MCF 10A (cell line): ENCODE measurements at regions of chr20 and their contacts with region 1.

Region 1: DNA sequence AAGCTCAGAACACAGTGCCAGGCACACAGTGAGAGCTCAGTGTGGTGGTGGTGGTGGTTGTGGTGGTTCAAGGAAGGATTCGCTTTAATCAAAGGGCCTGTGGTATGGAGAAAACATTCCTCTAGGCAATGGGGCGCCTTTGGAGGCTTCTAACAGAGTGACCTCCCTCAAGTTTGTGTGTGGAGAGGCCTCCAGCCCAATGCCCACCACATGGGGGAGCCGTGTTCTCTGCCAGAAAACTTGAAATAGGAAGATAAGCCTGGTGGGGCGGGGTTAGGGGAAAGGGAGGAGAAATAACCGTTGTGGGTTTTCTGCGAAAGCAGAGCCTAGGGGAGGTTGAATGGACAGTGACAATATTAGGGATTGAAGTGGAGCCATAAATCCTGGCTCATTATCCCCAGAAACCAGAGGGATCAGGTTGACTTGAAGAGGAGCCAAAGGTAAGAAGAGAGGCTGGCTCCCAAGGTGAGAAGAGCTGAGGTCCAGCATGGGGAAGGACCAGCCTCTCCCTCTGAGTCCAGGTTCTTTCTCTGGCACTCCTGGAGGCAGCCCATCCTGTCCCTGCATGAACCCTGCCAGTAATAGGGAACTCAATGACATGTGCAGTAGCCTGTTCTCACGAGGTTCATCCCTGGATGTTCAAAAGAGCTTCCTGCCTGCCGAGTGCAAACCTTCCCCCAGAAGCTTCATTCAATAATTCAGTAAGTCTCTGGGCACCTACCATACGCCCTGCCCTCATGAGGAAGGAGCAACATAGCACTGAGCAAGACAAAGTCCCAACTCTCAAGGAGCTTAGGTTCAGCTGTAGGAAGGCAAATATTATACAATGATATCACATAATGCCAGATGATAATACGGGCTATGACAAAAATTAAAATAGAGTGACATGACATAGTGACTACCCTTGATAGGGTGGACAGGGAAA is 51.4 kb downstream of the TGM2 start:
- DNase-seq: peak; percentile 54
- H3K4me3 Mint-ChIP-seq: no peak overlapping the region
- H3K27ac Mint-ChIP-seq: no peak overlapping the region
- H3K4me1 Mint-ChIP-seq: peaks cover 41% of the 10 kb centered on the region
- H3K27me3 Mint-ChIP-seq: no peaks in the 10 kb centered on the region
- CTCF ChIP-seq: no peak

Region 2: DNA sequence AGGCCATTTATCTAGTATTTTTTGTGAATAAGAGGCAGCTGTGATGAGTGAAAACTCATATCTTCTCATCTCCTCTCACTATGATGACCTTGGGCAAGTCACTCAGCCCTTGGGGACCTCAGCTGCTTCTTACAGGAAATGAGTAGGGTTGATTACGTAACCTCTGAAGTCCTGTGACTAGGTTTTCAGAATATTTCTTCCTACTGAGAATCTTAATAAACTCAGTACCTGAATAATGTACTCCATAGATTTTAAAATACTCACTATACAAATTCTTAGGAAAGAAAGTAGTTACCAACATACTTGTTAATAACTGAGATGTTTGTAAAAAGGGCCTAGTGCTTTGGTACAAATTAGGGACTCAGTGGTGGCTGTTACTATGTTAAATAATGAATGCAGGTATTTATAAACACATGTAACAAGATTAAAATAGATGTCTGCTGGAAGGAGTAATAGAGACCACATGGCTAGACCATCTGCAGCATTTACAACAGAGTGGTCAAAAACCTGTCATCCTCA is 19.2 kb before region 1 on chr20:
- CTCF ChIA-PET with region 1: no interaction called
- POLR2A ChIA-PET with region 1: interaction called, 10 read pairs
- intact Hi-C with region 1: no loop called
- DNase-seq: peak; percentile 73
- H3K4me3 Mint-ChIP-seq: no peak overlapping the region
- H3K27ac Mint-ChIP-seq: peak overlapping the region; percentile 52
- H3K4me1 Mint-ChIP-seq: peaks cover 12% of the 10 kb centered on the region
- H3K27me3 Mint-ChIP-seq: no peaks in the 10 kb centered on the region
- CTCF ChIP-seq: no peak

Region 3: DNA sequence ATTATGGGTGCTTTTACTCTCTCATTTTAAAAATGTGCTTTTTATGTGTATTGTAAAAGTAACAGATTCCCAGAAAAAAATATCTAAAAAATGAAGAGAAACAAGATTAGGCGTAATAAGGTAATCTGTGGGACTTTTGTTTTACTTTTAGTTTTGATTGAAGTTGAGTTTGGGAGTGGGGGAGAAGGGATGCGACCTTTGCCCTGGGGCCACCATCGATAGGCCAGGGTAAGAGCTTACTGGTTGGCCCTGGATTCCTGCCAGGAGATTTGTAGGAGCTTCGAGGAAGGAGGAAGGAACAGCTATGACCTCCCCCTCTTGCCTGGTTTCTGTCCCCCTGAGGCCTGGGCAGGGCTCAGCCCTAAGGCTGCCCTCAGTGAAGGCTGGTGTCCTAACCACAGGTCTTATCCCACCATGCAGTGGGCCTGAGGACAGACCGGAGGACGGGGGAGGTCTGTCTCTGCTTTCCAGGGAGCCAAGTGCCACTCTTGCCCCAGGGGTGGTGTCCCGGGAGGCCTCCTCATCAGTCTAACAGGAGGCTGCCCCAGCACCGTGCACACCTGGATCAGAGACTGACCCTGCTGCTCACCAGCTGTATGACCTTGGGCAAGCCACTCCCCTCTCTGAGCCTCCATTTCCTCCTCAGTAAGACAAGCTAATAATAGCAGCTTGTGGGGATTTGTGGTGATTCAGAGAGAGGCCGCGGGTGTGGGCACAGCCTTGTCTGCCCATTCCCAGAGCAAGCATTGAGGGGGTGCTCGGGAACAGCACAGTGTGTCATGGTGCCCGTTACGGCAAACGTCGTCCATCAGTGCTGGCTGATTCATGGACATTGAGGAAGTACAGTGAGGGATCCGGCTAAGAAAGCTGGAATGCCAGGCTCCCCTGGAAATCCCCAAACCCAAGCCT is 30.2 kb after region 1 on chr20:
- CTCF ChIA-PET with region 1: interaction called, 3 read pairs
- POLR2A ChIA-PET with region 1: interaction called, 11 read pairs
- intact Hi-C with region 1: no loop called
- DNase-seq: peak; percentile 97
- H3K4me3 Mint-ChIP-seq: peak overlapping the region; percentile 40
- H3K27ac Mint-ChIP-seq: peak overlapping the region; percentile 95
- H3K4me1 Mint-ChIP-seq: peaks cover 38% of the 10 kb centered on the region
- H3K27me3 Mint-ChIP-seq: no peaks in the 10 kb centered on the region
- CTCF ChIP-seq: no peak

Region 4: DNA sequence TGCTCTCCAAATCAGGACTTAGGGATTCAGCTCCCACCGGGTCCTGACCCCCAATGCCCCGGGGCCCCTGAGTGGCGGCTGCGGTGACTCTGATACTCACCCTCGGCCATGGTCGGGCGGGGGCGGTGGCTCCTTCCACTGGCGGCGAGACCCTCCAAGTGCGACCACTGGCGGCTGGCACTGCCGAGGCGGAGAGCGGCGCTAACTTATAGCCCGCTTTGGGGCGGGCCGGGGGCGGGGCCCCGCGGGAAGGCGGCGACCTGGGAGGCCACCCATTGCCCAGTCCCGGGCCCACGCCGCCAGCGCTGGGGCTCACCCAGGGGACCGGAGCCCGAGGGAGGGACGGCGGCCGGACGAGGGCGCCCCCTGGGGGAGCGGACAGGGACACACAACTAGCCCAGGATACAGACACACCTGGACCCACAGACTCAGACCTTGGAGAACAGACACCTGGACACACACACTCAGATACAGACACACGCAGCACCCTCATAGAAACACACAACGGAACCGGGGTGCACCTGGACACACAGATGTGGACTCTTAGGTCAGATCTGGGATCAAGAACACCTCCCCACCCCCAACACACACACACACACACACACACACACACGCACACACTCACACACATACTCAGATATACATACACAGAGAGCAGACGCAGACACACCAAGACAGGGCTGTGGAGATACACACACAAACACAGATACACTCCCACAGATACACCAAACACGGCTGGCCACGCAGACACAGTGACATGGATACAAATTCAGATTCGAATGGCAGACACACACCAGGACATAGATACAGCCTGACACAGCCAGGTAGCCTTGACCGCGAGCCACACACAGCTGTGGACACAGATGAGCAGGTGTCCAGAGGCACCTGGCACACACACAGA is 51.7 kb after region 1 on chr20 and contains the start of gene TGM2:
- CTCF ChIA-PET with region 1: interaction called, 6 read pairs
- POLR2A ChIA-PET with region 1: interaction called, 5 read pairs
- intact Hi-C with region 1: loop called (anchors 10 kb)
- DNase-seq: peak; percentile 75
- H3K4me3 Mint-ChIP-seq: peak within 1 kb of the TSS; percentile 11
- H3K27ac Mint-ChIP-seq: peak within 1 kb of the TSS; percentile 61
- H3K4me1 Mint-ChIP-seq: peaks cover 41% of the 10 kb centered on the region
- H3K27me3 Mint-ChIP-seq: no peaks in the 10 kb centered on the region
- CTCF ChIP-seq: peak; percentile 75
- total RNA-seq, gene TGM2: 0.76 and 1.5 TPM in 2 replicates

Region 5: GRCh38 chr20:38196592-38196991 is 82.9 kb after region 1 on chr20:
- CTCF ChIA-PET with region 1: interaction called, 4 read pairs
- POLR2A ChIA-PET with region 1: interaction called, 10 read pairs
- intact Hi-C with region 1: no loop called
- DNase-seq: peak; percentile 82
- H3K4me3 Mint-ChIP-seq: no peak overlapping the region
- H3K27ac Mint-ChIP-seq: peak overlapping the region; percentile 3
- H3K4me1 Mint-ChIP-seq: peaks cover 39% of the 10 kb centered on the region
- H3K27me3 Mint-ChIP-seq: no peaks in the 10 kb centered on the region
- CTCF ChIP-seq: no peak

Region 6: GRCh38 chr20:38358556-38358955 is 244.9 kb after region 1 on chr20:
- CTCF ChIA-PET with region 1: no interaction called
- POLR2A ChIA-PET with region 1: no interaction called
- intact Hi-C with region 1: no loop called
- DNase-seq: no peak
- H3K4me3 Mint-ChIP-seq: no peak overlapping the region
- H3K27ac Mint-ChIP-seq: no peak overlapping the region
- H3K4me1 Mint-ChIP-seq: no peaks in the 10 kb centered on the region
- H3K27me3 Mint-ChIP-seq: no peaks in the 10 kb centered on the region
- CTCF ChIP-seq: no peak

Region 7: GRCh38 chr20:38550274-38550673 is 436.6 kb after region 1 on chr20:
- CTCF ChIA-PET with region 1: no interaction called
- POLR2A ChIA-PET with region 1: no interaction called
- intact Hi-C with region 1: no loop called
- DNase-seq: peak; percentile 11
- H3K4me3 Mint-ChIP-seq: no peak overlapping the region
- H3K27ac Mint-ChIP-seq: no peak overlapping the region
- H3K4me1 Mint-ChIP-seq: no peaks in the 10 kb centered on the region
- H3K27me3 Mint-ChIP-seq: no peaks in the 10 kb centered on the region
- CTCF ChIP-seq: no peak